Left ventricle myocardium inferior (tissue), 1 donor: ENCODE measurements at regions of chr2 and their contacts with region 1.

Region 1: DNA sequence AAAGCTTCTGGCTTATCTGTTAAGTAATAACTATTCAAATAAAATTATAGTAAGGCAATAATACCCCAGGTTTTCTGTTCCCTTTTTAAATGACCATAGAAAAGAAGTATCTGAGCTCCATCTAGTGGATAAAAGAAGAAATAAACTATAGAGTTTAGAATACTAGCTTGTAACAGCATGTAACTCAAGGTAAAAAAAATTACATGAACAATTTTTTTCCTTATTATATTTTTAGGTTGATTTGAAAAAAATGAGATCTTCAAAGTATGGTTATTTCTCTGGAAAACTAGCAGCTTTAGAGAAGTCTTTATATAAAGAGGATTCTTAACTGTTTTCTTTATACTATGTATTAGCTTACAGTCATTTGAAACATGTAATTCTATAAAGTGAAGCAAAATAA is 58.1 kb downstream of the NCKAP1 start:
- DNase-seq: no peak
- H3K4me3 ChIP-seq: no peak overlapping the region
- H3K27ac ChIP-seq: no peak overlapping the region
- H3K4me1 ChIP-seq: no peaks in the 10 kb centered on the region
- H3K27me3 ChIP-seq: no peaks in the 10 kb centered on the region
- CTCF ChIP-seq: peak; percentile 71

Region 2: GRCh38 chr2:182784777-182785176 is 195.3 kb before region 1 on chr2:
- intact Hi-C with region 1: loop called (anchors 10 kb)
- DNase-seq: no peak
- H3K4me3 ChIP-seq: no peak overlapping the region
- H3K27ac ChIP-seq: no peak overlapping the region
- H3K4me1 ChIP-seq: no peaks in the 10 kb centered on the region
- H3K27me3 ChIP-seq: no peaks in the 10 kb centered on the region
- CTCF ChIP-seq: peak; percentile 68

Region 3: GRCh38 chr2:182920631-182921056 is 59.5 kb before region 1 on chr2:
- intact Hi-C with region 1: loop called (anchors 10 kb)
- DNase-seq: no peak
- H3K4me3 ChIP-seq: no peak overlapping the region
- H3K27ac ChIP-seq: no peak overlapping the region
- H3K4me1 ChIP-seq: peaks cover 2% of the 10 kb centered on the region
- H3K27me3 ChIP-seq: no peaks in the 10 kb centered on the region
- CTCF ChIP-seq: no peak